Caco-2 (cell line): ENCODE measurements at regions of chr15 and their contacts with region 1.

Region 1: DNA sequence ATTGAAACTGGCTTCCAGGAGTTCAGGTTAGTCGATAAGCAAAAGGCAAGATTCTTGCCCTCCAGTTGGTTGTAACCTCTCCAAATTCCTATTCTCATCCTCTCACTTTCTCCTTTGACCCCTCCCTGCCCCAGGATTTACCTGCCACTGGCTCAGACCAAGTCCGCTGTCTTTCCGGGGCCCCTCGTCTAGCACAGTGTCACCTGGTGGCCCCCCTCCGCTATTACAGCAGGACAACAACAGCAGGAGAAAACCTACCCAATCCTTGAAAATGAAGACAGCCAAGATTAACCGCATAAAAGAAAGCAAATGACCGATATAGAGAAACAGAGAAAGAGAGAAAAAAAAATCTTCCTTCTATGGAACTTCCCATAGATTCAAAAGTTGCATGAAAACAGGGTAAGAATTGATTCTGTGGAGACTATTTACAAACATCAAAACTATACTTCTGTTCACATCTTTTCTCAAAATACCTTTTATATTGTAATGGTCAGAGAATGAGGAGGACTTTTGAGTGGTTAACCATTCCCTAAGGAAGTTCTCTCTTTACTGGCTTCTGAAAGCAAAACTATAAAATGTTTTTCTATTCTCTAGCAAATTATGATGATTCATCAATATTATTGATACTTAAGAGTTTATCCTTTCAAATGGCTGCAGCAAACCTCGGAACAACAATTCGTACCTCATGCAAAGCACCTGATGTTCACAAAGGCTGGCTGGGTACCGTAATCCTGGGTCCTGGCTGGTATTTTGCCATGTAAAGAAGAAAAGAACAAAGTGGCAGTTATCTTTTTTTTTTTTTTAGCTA is 10.0 kb upstream of the ST8SIA2 start:
- DNase-seq: peak in 1 of 2 experiments; percentile 57
- H3K4me3 ChIP-seq: no peak overlapping the region
- H3K4me3 Mint-ChIP-seq: no peak overlapping the region
- H3K27ac Mint-ChIP-seq: no peak overlapping the region
- H3K4me1 ChIP-seq: no peaks in the 10 kb centered on the region
- H3K4me1 Mint-ChIP-seq: no peaks in the 10 kb centered on the region
- H3K27me3 ChIP-seq: no peaks in the 10 kb centered on the region
- H3K27me3 Mint-ChIP-seq: peaks cover 30% of the 10 kb centered on the region
- CTCF ChIP-seq: peak; percentile 73 to 78

Region 2: GRCh38 chr15:92091155-92091734 is 292.5 kb before region 1 on chr15:
- CTCF ChIA-PET with region 1: interaction called, 4 read pairs
- POLR2A ChIA-PET with region 1: no interaction called
- intact Hi-C with region 1: loop called (anchors 1 kb)
- DNase-seq: peak; percentile 71 to 80
- H3K4me3 ChIP-seq: no peak overlapping the region
- H3K4me3 Mint-ChIP-seq: no peak overlapping the region
- H3K27ac Mint-ChIP-seq: no peak overlapping the region
- H3K4me1 ChIP-seq: no peaks in the 10 kb centered on the region
- H3K4me1 Mint-ChIP-seq: no peaks in the 10 kb centered on the region
- H3K27me3 ChIP-seq: no peaks in the 10 kb centered on the region; the same call in 1 of the 2 replicates
- H3K27me3 Mint-ChIP-seq: peaks cover 8% of the 10 kb centered on the region
- CTCF ChIP-seq: peak; percentile 76 to 81

Region 3: GRCh38 chr15:92244703-92245102 is 139.0 kb before region 1 on chr15:
- CTCF ChIA-PET with region 1: no interaction called
- POLR2A ChIA-PET with region 1: no interaction called
- intact Hi-C with region 1: loop called (anchors 10 kb)
- DNase-seq: no peak
- H3K4me3 ChIP-seq: no peak overlapping the region
- H3K4me3 Mint-ChIP-seq: no peak overlapping the region
- H3K27ac Mint-ChIP-seq: no peak overlapping the region
- H3K4me1 ChIP-seq: no peaks in the 10 kb centered on the region
- H3K4me1 Mint-ChIP-seq: no peaks in the 10 kb centered on the region
- H3K27me3 ChIP-seq: 0 out of 2 replicates have a peak, but pooled peaks cover 1% of the 10 kb centered on the region
- H3K27me3 Mint-ChIP-seq: peaks cover 15% of the 10 kb centered on the region
- CTCF ChIP-seq: no peak

Region 4: DNA sequence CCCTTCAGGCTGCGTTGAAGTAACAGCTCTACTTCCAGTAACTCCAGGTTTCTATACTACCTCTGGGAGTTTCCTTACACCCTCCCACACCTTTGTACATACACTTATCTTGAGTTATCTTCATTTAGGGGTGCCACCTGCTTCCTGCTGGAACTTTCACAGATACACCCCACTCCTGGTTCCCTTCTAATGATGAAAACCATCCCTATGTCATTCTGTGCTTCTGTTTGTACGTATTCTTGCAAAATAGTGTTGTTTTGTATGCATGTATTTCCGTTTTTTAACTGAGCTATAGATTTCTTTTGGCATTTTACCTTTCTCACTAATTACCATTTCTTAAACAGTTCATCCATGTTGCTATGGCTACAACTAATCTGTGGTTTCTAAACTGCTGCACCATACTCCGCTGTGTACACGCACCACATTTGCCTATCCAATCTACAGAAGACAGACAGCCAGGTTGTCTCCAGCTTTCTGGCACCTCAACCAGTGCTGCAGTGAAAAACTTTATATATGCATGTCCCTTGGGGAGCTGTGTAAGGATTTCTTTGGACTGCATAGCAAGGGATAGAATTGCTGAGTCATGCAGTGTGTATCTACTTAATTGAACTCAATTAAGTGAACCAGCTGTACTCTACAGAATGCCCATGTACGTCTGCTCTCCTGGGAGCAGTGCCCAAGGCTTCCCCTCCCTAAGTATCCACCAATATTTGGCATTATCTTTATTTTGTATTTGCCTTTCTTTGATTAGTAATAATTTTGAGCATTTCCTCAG is 51.4 kb before region 1 on chr15:
- CTCF ChIA-PET with region 1: no interaction called
- POLR2A ChIA-PET with region 1: no interaction called
- intact Hi-C with region 1: no loop called
- DNase-seq: no peak
- H3K4me3 ChIP-seq: no peak overlapping the region
- H3K4me3 Mint-ChIP-seq: no peak overlapping the region
- H3K27ac Mint-ChIP-seq: no peak overlapping the region
- H3K4me1 ChIP-seq: no peaks in the 10 kb centered on the region
- H3K4me1 Mint-ChIP-seq: no peaks in the 10 kb centered on the region
- H3K27me3 ChIP-seq: no peaks in the 10 kb centered on the region; the same call in 1 of the 2 replicates
- H3K27me3 Mint-ChIP-seq: peaks cover 17% of the 10 kb centered on the region
- CTCF ChIP-seq: no peak